ENCODE measurements at regions of chr6 and their contacts with region 1.

Region 1: GRCh38 chr6:84428300-84428907 is 201.0 kb upstream of the CEP162 start:
- DNase-seq: peak; percentile 38 to 69 (median 48)
- ATAC-seq: peak; percentile 90
- H3K4me3 ChIP-seq: no peak overlapping the region
- H3K27ac ChIP-seq: no peak overlapping the region
- H3K4me1 ChIP-seq: no peaks in the 10 kb centered on the region
- H3K27me3 ChIP-seq: no peaks in the 10 kb centered on the region; a peak in 1 of 5 replicates
- CTCF ChIP-seq: peak; percentile 76 to 83 (median 80)
- EP300 ChIP-seq: no peak
- POLR2A ChIP-seq: no peak
- RAD21 ChIP-seq: peak; percentile 86 to 90

Region 2: GRCh38 chr6:84568971-84569370 is 140.6 kb after region 1 on chr6:
- CTCF ChIA-PET with region 1: no interaction called
- POLR2A ChIA-PET with region 1: no interaction called
- in situ Hi-C with region 1: no loop called
- intact Hi-C with region 1: loop called (anchors 5 kb)
- DNase-seq: peak in 1 of 4 experiments; percentile 9
- ATAC-seq: no peak
- H3K4me3 ChIP-seq: no peak overlapping the region
- H3K27ac ChIP-seq: no peak overlapping the region
- H3K4me1 ChIP-seq: no peaks in the 10 kb centered on the region
- H3K27me3 ChIP-seq: no peaks in the 10 kb centered on the region
- CTCF ChIP-seq: peak in 2 of 3 experiments; percentile 17 to 41; a peak in 3 of 6 replicates
- EP300 ChIP-seq: no peak
- POLR2A ChIP-seq: no peak
- RAD21 ChIP-seq: peak; percentile 24 to 54; a peak in 2 of 4 replicates

Region 3: GRCh38 chr6:84618046-84618752 is 189.8 kb after region 1 on chr6:
- CTCF ChIA-PET with region 1: no interaction called
- POLR2A ChIA-PET with region 1: no interaction called
- in situ Hi-C with region 1: no loop called
- intact Hi-C with region 1: no loop called
- DNase-seq: no peak
- ATAC-seq: no peak
- H3K4me3 ChIP-seq: no peak overlapping the region
- H3K27ac ChIP-seq: no peak overlapping the region
- H3K4me1 ChIP-seq: no peaks in the 10 kb centered on the region; a peak in 1 of 5 replicates
- H3K27me3 ChIP-seq: peaks cover 0 to 3% of the 10 kb centered on the region in 2 experiments; a peak in 1 of 5 replicates
- CTCF ChIP-seq: no peak
- EP300 ChIP-seq: no peak
- POLR2A ChIP-seq: no peak
- RAD21 ChIP-seq: no peak

Region 4: DNA sequence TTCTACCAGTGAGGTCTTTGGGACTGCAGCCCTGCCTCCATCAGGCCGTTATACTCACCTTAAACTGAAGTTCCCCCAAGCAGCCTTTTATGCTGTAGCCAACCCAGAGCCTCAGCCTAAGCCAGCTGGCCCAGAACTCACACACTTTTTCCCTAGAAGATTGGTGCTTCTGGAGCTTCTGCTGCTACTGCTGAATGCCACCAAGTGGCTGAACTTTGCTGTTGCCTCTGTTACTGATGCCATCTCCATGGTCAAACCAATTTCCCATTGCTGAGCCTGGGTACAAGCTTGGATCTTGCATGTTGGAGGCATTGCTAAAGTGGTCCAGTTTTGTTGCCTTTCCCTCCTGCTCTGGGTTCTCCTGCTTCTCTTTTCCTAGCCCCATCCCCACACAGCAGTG is 351.0 kb after region 1 on chr6:
- CTCF ChIA-PET with region 1: no interaction called
- POLR2A ChIA-PET with region 1: no interaction called
- in situ Hi-C with region 1: no loop called
- intact Hi-C with region 1: loop called (anchors 5 kb)
- DNase-seq: no peak
- ATAC-seq: no peak; the same call in 2 of the 3 replicates
- H3K4me3 ChIP-seq: no peak overlapping the region
- H3K27ac ChIP-seq: no peak overlapping the region
- H3K4me1 ChIP-seq: peaks cover 0 to 6% of the 10 kb centered on the region in 2 experiments; a peak in 2 of 5 replicates
- H3K27me3 ChIP-seq: peaks cover 0 to 7% of the 10 kb centered on the region in 2 experiments; a peak in 2 of 5 replicates
- CTCF ChIP-seq: peak in 2 of 3 experiments; percentile 22 to 30; a peak in 2 of 6 replicates
- EP300 ChIP-seq: no peak
- POLR2A ChIP-seq: no peak
- RAD21 ChIP-seq: peak in 1 of 2 experiments; percentile 34; a peak in 2 of 4 replicates

Region 5: DNA sequence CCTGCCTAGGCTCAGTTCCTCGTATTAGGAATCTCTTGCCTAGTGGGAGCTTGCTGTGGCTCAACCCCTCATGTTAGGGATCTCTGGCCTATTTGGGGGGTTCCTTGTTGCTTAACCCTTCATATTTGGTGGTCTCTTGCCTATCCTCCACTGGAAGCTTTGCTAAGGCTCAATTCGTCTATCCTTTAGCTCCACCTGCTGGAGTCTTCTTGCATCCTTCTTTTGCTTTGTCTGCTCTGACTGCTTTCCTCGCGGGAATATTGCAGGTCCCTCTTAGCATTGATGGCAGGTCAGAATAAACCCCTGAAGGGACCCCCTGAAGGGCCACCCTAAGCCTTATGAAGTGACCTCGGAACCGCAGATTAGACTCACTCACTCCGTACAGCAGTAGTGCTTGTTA is 539.0 kb after region 1 on chr6:
- CTCF ChIA-PET with region 1: interaction called, 10 read pairs
- POLR2A ChIA-PET with region 1: no interaction called
- in situ Hi-C with region 1: no loop called
- intact Hi-C with region 1: loop called (anchors 1 kb)
- DNase-seq: peak; percentile 32 to 65 (median 36)
- ATAC-seq: peak; percentile 90
- H3K4me3 ChIP-seq: no peak overlapping the region
- H3K27ac ChIP-seq: no peak overlapping the region
- H3K4me1 ChIP-seq: no peaks in the 10 kb centered on the region
- H3K27me3 ChIP-seq: peaks cover 0 to 5% of the 10 kb centered on the region in 2 experiments; a peak in 2 of 5 replicates
- CTCF ChIP-seq: peak; percentile 62 to 74 (median 65)
- EP300 ChIP-seq: no peak
- POLR2A ChIP-seq: no peak
- RAD21 ChIP-seq: peak; percentile 83 to 89

Region 6: DNA sequence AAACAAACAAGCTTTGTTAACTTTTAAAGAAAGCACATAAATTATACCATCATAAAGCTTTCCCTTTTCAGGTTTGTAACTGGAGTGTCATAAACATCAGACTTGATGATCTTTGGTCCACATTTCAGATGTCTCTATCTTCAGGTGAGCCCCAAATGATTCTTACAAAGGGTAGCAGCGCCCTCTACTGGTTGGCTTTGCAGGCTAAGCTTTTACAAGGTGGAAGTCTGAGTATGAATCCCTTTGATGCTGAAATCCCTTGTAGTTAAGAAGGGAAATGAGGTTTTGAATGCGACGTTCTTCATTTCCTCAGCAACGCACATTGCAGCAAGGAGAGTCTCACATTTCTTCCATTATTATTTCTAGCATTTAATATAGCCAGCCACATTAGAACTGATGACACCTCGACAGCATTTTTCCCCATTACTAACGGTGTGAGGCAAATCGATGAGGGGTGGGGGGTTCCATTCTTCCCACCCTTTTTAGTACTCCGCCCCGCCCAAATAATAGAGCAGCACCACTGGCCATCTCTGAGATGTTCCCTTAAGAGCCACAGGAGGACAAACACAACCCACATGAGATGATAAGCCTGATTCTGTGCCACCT is 895.1 kb after region 1 on chr6:
- CTCF ChIA-PET with region 1: interaction called, 4 read pairs
- POLR2A ChIA-PET with region 1: no interaction called
- in situ Hi-C with region 1: loop called (anchors 25 kb)
- intact Hi-C with region 1: loop called (anchors 5 kb)
- DNase-seq: peak; percentile 37 to 82 (median 56)
- ATAC-seq: peak; percentile 92
- H3K4me3 ChIP-seq: no peak overlapping the region
- H3K27ac ChIP-seq: no peak overlapping the region
- H3K4me1 ChIP-seq: no peaks in the 10 kb centered on the region
- H3K27me3 ChIP-seq: no peaks in the 10 kb centered on the region
- CTCF ChIP-seq: peak; percentile 68 to 84 (median 83)
- EP300 ChIP-seq: no peak
- POLR2A ChIP-seq: no peak
- RAD21 ChIP-seq: peak; percentile 74 to 83

Measured in K562 (cell line).